HCT116 (cell line): ENCODE measurements at regions of chr9 and their contacts with region 1.

Region 1: GRCh38 chr9:134099123-134099787 is 31.4 kb upstream of the BRD3 start:
- DNase-seq: peak; percentile 49
- ATAC-seq: peak; percentile 94
- H3K4me3 ChIP-seq: no peak overlapping the region
- H3K27ac ChIP-seq: no peak overlapping the region
- H3K4me1 ChIP-seq: no peaks in the 10 kb centered on the region
- H3K27me3 ChIP-seq: peaks cover 14% of the 10 kb centered on the region
- CTCF ChIP-seq: peak; percentile 87 to 92 (median 88); a peak in 5 of 6 replicates
- POLR2A ChIP-seq: no peak
- RAD21 ChIP-seq: peak; percentile 91

Region 2: DNA sequence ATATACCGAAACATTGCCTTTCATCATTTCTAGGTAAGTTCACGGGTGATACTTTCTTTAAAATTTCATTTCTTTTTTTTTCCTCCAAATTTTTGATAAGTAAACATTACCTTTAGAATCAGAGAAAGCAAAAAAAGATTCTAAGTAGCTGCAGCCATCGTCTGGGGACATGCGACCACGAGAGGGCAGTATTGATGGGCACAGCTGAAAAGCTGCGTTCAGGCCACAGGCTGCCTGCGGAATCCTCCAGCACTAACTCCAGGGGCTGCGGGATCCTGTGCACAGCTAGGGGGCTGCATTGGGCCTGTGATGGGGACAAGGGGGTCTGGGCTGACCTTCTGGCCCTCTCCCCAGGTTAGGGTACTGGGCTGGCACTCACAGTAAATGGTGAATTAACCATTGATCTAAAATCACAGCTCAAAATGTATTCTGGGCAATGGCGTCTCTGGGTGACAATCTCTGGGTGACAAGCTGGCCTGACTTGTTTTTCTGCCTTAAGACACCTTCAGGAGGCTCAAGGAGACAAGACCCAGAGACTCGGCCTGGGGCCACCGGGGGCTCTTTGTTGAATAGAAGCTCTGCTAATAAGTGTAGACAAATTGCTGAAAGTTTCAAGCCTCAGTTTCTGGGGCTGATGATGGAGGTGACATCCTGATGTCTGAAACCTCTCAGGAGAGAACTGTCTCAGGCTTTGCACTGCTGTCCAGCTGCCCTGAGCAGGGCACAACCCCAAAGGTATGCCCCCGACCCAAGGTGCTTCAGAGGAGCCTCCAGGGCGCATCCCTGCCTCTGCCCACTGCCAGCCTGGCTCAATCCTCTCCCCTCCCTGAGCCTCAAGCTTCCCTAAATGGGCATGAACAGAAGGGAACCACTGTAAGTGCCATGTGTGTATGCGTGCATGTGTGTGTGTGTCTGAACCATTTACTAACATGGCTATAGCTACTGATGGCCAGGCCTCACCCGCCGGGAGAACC is 316.8 kb before region 1 on chr9:
- CTCF ChIA-PET with region 1: interaction called, 6 read pairs
- POLR2A ChIA-PET with region 1: no interaction called
- RAD21 ChIA-PET with region 1: no interaction called
- intact Hi-C with region 1: loop called (anchors 2 kb)
- DNase-seq: peak; percentile 26
- ATAC-seq: peak; percentile 81
- H3K4me3 ChIP-seq: no peak overlapping the region
- H3K27ac ChIP-seq: no peak overlapping the region
- H3K4me1 ChIP-seq: no peaks in the 10 kb centered on the region
- H3K27me3 ChIP-seq: no peaks in the 10 kb centered on the region
- CTCF ChIP-seq: peak; percentile 75 to 88 (median 87); a peak in 5 of 6 replicates
- POLR2A ChIP-seq: no peak
- RAD21 ChIP-seq: peak; percentile 70

Region 3: DNA sequence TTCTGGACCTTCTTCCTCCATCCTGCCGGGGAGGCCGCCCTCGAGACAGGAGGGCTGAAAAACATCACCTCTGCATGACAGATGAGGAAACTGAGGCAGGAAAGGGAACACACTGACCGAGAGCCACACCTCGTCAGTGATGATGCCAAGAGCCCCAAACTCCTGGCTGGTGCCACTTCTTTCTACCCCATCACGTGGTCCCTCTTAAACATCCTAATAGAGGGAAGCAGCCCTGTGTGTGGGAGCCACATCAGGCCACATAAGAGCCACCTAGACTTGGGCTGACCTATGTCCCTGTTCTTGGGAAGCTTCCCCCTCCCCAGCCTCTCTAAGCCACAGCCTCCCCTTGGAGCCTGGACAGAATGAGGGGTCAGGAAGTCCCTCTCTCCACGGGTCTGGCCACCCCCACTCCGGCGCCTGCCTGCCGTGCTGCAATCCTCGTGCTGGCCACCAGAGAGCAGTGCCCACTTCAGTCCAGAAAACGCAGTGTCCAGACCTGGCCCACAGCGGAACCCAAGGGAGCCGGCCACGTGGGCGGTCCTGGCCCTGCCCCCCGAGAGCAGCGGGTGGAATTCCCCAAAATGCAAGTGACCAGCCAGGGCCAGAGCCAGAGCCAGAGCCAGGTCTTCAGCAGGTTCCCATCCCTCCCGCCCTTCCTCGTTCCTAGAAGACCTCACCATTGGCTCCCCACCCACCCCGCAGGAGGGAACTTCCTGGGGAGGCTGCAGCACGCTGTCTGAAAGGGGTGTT is 306.4 kb before region 1 on chr9:
- CTCF ChIA-PET with region 1: no interaction called
- POLR2A ChIA-PET with region 1: no interaction called
- RAD21 ChIA-PET with region 1: no interaction called
- intact Hi-C with region 1: loop called (anchors 2 kb)
- DNase-seq: peak; percentile 16
- ATAC-seq: peak; percentile 89
- H3K4me3 ChIP-seq: no peak overlapping the region
- H3K27ac ChIP-seq: no peak overlapping the region
- H3K4me1 ChIP-seq: peaks cover 2 to 7% of the 10 kb centered on the region in 2 experiments; a peak in 2 of 4 replicates
- H3K27me3 ChIP-seq: no peaks in the 10 kb centered on the region
- CTCF ChIP-seq: peak; percentile 85 to 89 (median 85)
- POLR2A ChIP-seq: no peak
- RAD21 ChIP-seq: peak; percentile 93

Region 4: DNA sequence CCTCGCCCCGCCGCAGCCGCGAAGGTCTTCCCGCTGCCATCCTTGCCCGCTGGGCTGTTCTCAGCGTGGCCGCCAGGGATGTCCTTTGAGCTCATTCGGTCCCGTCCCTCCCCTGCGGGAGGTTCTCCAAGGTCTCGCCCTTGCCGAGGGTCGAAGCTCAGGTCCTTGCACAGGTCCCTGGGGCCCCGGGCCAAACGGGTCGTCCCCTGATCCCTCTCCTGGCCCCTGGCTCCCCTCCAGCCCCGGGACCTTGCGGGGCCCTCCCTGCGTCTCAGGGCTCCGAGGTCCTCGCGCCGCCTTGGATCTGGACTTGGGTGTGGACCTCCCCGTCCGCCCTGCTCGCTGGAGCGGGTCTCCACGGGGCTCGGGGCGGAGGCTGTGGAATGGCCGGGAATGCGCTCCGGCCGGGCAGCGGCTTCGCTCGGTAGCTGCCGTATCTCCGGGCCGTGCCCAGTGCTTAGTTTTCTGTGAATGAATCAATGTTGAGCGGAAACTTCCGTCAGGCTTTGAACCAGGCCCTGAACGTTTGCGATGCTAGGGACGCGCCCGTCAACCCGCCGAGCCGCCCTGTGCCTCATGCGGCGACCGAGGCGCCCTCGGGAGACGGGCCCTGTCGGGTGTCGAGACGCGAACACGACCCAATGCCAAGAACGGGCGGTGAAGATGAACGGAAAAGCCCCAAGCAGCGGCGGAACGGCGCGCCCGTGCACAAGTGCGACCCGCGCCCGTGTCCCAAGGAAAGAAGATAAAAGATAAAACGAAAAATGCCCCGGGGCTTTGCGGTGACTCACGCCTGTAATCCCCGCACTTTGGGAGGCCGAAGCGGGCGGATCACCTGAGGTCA is 64.3 kb after region 1 on chr9:
- CTCF ChIA-PET with region 1: no interaction called
- POLR2A ChIA-PET with region 1: no interaction called
- RAD21 ChIA-PET with region 1: no interaction called
- intact Hi-C with region 1: no loop called
- DNase-seq: no peak
- ATAC-seq: no peak
- H3K4me3 ChIP-seq: peak overlapping the region in 1 of 2 experiments; percentile 16; a peak in 2 of 4 replicates
- H3K27ac ChIP-seq: no peak overlapping the region
- H3K4me1 ChIP-seq: peaks cover 0 to 9% of the 10 kb centered on the region in 2 experiments; a peak in 3 of 4 replicates
- H3K27me3 ChIP-seq: no peaks in the 10 kb centered on the region
- CTCF ChIP-seq: no peak
- POLR2A ChIP-seq: no peak
- RAD21 ChIP-seq: no peak